ENCODE measurements at regions of chr13 and their contacts with region 1.

Region 1: GRCh38 chr13:110444226-110444653 is 117.3 kb downstream of the RAB20 start:
- DNase-seq: no peak
- H3K27ac ChIP-seq: peak overlapping the region; percentile 23; the same call in 1 of the 2 replicates
- CTCF ChIP-seq: no peak

Region 2: DNA sequence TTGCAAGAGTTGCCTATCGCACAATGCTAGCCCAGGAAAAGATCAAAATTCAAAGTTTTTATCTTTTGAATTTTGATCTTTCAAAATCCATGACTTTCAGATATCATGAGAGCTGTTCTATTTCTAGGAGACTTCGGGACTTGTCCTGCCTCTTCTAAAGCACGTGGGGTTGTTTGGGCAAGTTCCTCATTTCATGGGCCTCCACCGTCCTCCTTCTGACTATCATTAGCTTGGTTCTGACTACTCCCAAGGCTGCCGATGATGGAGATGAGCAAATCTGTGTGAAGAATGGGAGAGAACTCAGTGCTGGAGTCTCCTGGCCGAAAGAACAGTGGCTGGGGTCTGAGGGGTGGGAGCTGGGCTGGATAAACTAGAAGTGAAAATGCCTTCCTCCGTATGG is 223.8 kb before region 1 on chr13:
- CTCF ChIA-PET with region 1: interaction called, 11 read pairs
- POLR2A ChIA-PET with region 1: no interaction called
- DNase-seq: no peak
- H3K27ac ChIP-seq: no peak overlapping the region
- CTCF ChIP-seq: no peak

Region 3: GRCh38 chr13:110462091-110462490 is 17.9 kb after region 1 on chr13:
- CTCF ChIA-PET with region 1: no interaction called
- POLR2A ChIA-PET with region 1: no interaction called
- DNase-seq: no peak
- H3K27ac ChIP-seq: no peak overlapping the region
- CTCF ChIP-seq: no peak